GM12878 (cell line): ENCODE measurements at regions of chr9 and their contacts with region 1.

Region 1: GRCh38 chr9:95875305-95876137 is at the start of gene ERCC6L2:
- DNase-seq: peak; percentile 93
- ATAC-seq: peak; percentile 94
- H3K4me3 ChIP-seq: no peak within 1 kb of the TSS; the same call in 1 of the 2 replicates
- H3K27ac ChIP-seq: no peak within 1 kb of the TSS
- H3K4me1 ChIP-seq: peaks cover 3% of the 10 kb centered on the region
- H3K27me3 ChIP-seq: no peaks in the 10 kb centered on the region
- CTCF ChIP-seq: no peak
- EP300 ChIP-seq: no peak; a peak in 1 of 4 replicates
- POLR2A ChIP-seq: peak; percentile 96
- RAD21 ChIP-seq: no peak
- polyA plus RNA-seq, gene ERCC6L2: 8.1 to 8.4 TPM

Region 2: GRCh38 chr9:95327239-95327865 is 548.2 kb before region 1 on chr9:
- CTCF ChIA-PET with region 1: no interaction called
- POLR2A ChIA-PET with region 1: no interaction called
- RAD21 ChIA-PET with region 1: no interaction called
- SMC1A ChIA-PET with region 1: no interaction called
- in situ Hi-C with region 1: no loop called
- intact Hi-C with region 1: no loop called
- DNase-seq: no peak
- ATAC-seq: no peak
- H3K4me3 ChIP-seq: no peak overlapping the region
- H3K27ac ChIP-seq: no peak overlapping the region
- H3K4me1 ChIP-seq: no peaks in the 10 kb centered on the region
- H3K27me3 ChIP-seq: no peaks in the 10 kb centered on the region
- CTCF ChIP-seq: no peak
- EP300 ChIP-seq: no peak
- POLR2A ChIP-seq: no peak
- RAD21 ChIP-seq: no peak

Region 3: GRCh38 chr9:95857896-95858295 is 17.6 kb before region 1 on chr9:
- CTCF ChIA-PET with region 1: interaction called, 3 read pairs
- POLR2A ChIA-PET with region 1: interaction called, 4 read pairs
- RAD21 ChIA-PET with region 1: no interaction called
- SMC1A ChIA-PET with region 1: interaction called, 7 read pairs
- in situ Hi-C with region 1: no loop called
- intact Hi-C with region 1: loop called (anchors 2 kb)
- DNase-seq: peak; percentile 38
- ATAC-seq: peak; percentile 90
- H3K4me3 ChIP-seq: no peak overlapping the region
- H3K27ac ChIP-seq: 0 out of 2 replicates have a peak overlapping the region, but pooled peaks have one; percentile 27
- H3K4me1 ChIP-seq: peaks cover 46% of the 10 kb centered on the region
- H3K27me3 ChIP-seq: no peaks in the 10 kb centered on the region
- CTCF ChIP-seq: no peak
- EP300 ChIP-seq: peak in 1 of 2 experiments; percentile 15; a peak in 1 of 4 replicates
- POLR2A ChIP-seq: no peak
- RAD21 ChIP-seq: no peak

Region 4: DNA sequence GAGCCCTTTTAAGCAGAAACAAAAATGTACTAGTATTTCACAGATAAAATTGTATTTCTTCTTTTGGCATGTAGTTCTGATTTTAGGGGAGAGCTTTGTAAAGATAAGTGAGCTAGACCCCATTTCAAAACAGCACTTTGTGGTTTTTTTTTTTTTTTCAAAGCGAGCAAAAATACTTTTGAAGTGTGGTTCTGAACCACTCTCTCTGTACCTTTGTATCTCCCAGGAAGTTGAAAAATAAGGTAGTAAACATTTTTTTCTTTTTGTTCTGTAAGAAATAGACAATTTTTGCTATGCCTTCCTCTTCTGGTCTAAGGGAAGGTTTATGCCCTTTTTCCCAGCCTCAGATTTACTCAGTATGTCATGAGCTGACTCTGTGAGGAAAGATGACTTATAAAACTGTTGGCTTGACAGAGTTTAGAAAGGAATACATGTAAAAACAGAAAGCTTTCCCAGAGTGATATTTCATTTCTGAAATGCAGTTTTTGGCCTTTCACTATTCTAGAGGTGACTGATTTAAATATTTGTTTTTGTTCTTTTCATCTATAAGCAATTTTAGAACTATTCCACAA is 12.5 kb after region 1 on chr9:
- CTCF ChIA-PET with region 1: interaction called, 12 read pairs
- POLR2A ChIA-PET with region 1: interaction called, 5 read pairs
- RAD21 ChIA-PET with region 1: interaction called, 4 read pairs
- SMC1A ChIA-PET with region 1: interaction called, 8 read pairs
- in situ Hi-C with region 1: no loop called
- intact Hi-C with region 1: no loop called
- DNase-seq: no peak
- ATAC-seq: no peak
- H3K4me3 ChIP-seq: no peak overlapping the region
- H3K27ac ChIP-seq: no peak overlapping the region
- H3K4me1 ChIP-seq: peaks cover 6% of the 10 kb centered on the region; the same call in 1 of the 2 replicates
- H3K27me3 ChIP-seq: no peaks in the 10 kb centered on the region
- CTCF ChIP-seq: no peak
- EP300 ChIP-seq: no peak
- POLR2A ChIP-seq: no peak
- RAD21 ChIP-seq: no peak